ENCODE measurements at regions of chr16 and their contacts with region 1.

Region 1: DNA sequence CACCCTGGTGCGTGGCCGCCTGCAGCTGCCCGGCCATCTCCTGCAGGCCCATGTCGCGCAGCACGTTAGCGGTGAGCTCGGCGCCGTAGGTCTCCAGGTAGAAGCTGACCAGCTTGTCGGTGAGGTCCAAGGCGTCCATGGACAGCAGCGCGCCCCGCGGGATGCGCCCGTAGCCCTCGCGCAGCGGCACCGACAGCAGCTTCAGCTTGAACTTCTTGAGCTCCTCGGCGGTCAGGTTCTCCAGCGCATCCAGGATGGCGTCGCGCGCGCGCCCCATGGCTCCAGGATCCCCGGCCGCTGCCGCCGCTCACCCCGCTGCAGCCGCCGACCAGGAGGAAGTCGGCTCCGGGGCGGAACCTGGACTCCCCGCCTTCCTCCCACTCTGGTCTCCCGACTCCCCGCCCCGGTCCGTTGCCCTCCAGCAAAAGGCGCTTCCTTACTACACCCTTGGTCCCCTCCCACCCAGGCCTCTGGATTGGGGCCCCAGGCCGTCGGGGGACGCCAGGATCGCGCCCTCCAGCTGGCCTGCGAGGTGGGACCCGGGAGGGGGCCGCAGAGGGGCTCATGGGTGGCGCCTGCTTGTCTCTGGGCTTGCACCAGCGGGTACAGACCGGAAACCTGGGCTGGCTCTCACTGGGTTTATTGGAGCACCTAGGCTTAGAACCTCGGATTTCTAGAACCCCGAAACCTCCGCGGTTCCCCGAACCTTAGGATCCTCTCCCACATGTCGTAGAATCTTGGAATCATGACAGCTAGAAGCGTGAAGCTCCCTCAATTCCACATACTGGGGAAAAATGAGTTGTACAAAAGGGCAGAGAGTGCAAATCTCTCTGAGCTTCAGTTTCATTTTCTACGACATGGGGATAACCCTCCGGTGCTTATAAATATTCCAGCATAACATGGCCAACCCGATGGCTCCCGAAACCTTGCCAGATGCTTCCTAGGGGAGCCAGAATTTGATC is at the start of gene PYCARD:
- DNase-seq: peak; percentile 58
- ATAC-seq: peak; percentile 37
- H3K4me3 Mint-ChIP-seq: peak within 1 kb of the TSS; percentile 89
- H3K27ac Mint-ChIP-seq: peak within 1 kb of the TSS; percentile 64
- H3K4me1 Mint-ChIP-seq: peaks cover 62% of the 10 kb centered on the region
- H3K27me3 Mint-ChIP-seq: no peaks in the 10 kb centered on the region
- total RNA-seq, gene PYCARD: 97.7 to 99.5 TPM

Region 2: DNA sequence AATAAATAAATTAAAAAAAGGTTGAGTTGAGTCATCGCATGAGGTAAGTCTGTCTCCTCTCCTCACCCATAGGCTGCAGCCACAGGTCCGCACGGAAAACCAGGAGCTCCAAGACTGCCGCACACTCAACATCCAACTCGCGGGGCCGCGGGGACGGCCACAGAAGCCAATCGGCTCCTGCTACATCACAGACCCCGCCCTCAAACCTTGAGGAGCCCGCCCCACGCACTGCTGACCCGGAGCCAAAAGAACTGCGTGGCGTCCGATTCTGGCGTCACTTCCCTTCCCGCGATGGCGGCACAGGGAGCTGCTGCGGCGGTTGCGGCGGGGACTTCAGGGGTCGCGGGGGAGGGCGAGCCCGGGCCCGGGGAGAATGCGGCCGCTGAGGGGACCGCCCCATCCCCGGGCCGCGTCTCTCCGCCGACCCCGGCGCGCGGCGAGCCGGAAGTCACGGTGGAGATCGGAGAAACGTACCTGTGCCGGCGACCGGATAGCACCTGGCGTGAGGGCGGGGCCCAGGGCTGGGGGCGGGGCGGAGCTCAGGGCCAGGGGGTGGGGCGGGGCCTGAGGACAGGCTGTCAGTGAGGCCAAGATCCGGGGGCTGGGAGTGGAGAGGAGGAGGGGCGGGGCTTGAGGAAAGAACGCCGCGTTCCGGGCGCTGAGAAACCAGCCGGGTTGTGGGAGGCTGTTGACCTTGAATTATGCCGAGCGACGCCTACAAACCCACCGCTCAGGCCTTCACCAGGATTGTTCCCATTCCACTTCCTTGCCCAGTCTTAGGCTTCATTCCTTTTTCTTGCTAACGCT is 85.1 kb before region 1 on chr16 and contains the start of gene KAT8:
- CTCF ChIA-PET with region 1: no interaction called
- POLR2A ChIA-PET with region 1: no interaction called
- DNase-seq: peak; percentile 99
- ATAC-seq: peak; percentile 95
- H3K4me3 Mint-ChIP-seq: peak within 1 kb of the TSS; percentile 85
- H3K27ac Mint-ChIP-seq: peak within 1 kb of the TSS; percentile 87
- H3K4me1 Mint-ChIP-seq: peaks cover 26% of the 10 kb centered on the region
- H3K27me3 Mint-ChIP-seq: no peaks in the 10 kb centered on the region
- total RNA-seq, gene KAT8: 58.6 to 63.8 TPM

Region 3: DNA sequence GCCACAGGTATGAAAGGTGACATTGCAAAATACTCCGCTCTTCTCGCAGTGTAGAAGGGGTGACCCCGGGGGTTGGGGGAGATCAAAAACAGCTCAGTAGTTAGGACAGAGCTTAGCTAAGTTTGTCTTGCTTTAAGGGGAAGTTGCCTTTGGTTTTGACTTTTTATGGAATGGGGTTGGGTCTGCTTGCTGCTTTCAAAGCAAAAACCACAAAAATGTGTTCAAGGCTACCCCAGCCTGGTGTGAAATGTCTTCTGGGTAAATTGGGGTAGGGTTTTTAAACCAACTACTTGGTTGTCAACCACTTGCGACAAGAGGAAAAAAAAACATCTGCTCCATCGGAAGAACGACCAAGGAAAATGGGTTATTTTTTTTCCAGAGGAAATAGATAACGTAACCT is 16.5 kb before region 1 on chr16:
- CTCF ChIA-PET with region 1: interaction called, 4 read pairs
- POLR2A ChIA-PET with region 1: interaction called, 87 read pairs
- DNase-seq: no peak
- ATAC-seq: no peak
- H3K4me3 Mint-ChIP-seq: peak overlapping the region; percentile 46
- H3K27ac Mint-ChIP-seq: peak overlapping the region; percentile 79
- H3K4me1 Mint-ChIP-seq: peaks cover 88% of the 10 kb centered on the region
- H3K27me3 Mint-ChIP-seq: no peaks in the 10 kb centered on the region

Region 4: DNA sequence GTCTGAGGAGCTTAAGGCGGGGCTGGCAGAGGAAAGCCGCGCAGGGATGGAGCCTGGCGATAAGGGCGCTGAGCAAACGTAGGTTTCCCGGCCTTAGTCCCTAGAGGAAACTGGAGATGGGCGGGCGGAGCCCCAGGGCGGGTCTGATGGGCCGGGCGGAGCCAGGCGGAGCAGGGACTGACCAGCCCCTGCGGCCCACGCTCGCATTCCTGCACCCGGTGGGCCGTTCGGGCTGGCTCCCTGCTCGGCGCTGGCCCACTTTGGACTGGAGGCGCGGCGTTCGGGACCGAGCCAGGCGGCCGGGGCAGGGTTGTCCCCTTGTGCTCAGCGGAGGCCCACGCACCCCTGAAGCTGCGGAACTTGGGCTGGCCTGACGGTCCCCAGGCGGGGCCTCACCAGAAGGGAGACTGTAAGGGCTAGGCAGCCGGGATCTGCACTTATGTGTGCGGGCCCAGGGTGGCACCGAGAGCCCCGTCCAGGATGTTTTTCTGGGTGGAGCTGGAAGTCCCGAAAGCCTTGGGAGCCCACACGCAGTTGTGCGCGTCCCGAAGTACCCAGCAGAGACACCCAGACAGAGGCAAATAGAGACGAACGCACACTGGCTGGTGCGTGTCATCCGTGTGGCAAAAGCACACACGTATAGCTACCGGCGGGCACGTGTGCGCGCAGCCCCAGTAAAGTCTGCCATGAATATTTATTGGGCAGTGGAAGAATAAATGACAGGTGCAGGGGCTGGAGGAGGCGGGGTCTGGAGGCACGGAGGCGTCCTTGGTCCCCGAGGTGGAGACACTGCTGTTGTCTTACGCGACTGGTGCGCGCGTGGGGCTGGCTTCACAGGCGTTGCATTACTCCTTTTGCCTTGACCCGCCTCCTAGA is 12.8 kb after region 1 on chr16:
- CTCF ChIA-PET with region 1: interaction called, 11 read pairs
- POLR2A ChIA-PET with region 1: interaction called, 23 read pairs
- DNase-seq: no peak
- ATAC-seq: peak; percentile 50
- H3K4me3 Mint-ChIP-seq: peak overlapping the region; percentile 53
- H3K27ac Mint-ChIP-seq: no peak overlapping the region
- H3K4me1 Mint-ChIP-seq: peaks cover 27% of the 10 kb centered on the region
- H3K27me3 Mint-ChIP-seq: peaks cover 52% of the 10 kb centered on the region

Measured in activated CD8-positive, alpha-beta T cell treated with anti-CD3 and anti-CD28 coated beads, Interleukin-2, amount 10 ng/mL, durations not matched to agents 7 days and 5 days (primary cell).